CD8-positive, alpha-beta memory T cell (primary cell): ENCODE measurements at regions of chr3 and their contacts with region 1.

Region 1: GRCh38 chr3:141553055-141553454 is 66.2 kb downstream of the RASA2 start:
- DNase-seq: peak in 2 of 5 donors; percentile 74 to 77
- H3K4me3 ChIP-seq: no peak overlapping the region
- H3K4me3 Mint-ChIP-seq: peak overlapping the region in 6 of 7 donors; percentile 15 to 74 (median 56)
- H3K27ac ChIP-seq: no peak overlapping the region
- H3K27ac Mint-ChIP-seq: peak overlapping the region in 7 of 8 donors; percentile 51 to 95 (median 86)
- H3K4me1 ChIP-seq: peaks cover 71% of the 10 kb centered on the region
- H3K4me1 Mint-ChIP-seq: peaks cover 50 to 77% (median 67%) of the 10 kb centered on the region in 3 donors
- H3K27me3 ChIP-seq: no peaks in the 10 kb centered on the region
- H3K27me3 Mint-ChIP-seq: no peaks in the 10 kb centered on the region

Region 2: DNA sequence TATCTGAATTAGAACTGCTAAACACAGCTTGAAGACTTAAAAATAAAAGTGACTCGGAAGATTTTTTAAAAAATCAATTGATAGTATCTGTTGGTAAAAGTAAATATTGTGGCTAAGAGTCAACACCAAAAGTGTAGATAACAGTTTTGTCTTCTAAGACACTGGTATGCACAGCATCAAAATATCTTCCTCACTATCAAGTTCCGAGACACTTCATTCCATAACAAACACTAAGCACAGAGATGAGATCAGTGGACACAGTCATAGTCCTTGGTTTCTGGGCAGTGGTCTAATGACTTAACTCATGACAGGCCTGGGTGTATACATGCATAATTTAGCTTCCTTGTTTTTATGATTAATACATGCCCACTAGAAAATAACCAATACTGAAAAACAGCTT is 258.2 kb before region 1 on chr3:
- CTCF ChIA-PET with region 1: no interaction called
- POLR2A ChIA-PET with region 1: no interaction called
- DNase-seq: no peak
- H3K4me3 ChIP-seq: peak overlapping the region; percentile 20
- H3K4me3 Mint-ChIP-seq: peak overlapping the region; percentile 19 to 86 (median 82)
- H3K27ac ChIP-seq: no peak overlapping the region
- H3K27ac Mint-ChIP-seq: peak overlapping the region; percentile 3 to 90 (median 79)
- H3K4me1 ChIP-seq: peaks cover 16% of the 10 kb centered on the region
- H3K4me1 Mint-ChIP-seq: peaks cover 21 to 24% (median 21%) of the 10 kb centered on the region in 3 donors
- H3K27me3 ChIP-seq: no peaks in the 10 kb centered on the region
- H3K27me3 Mint-ChIP-seq: no peaks in the 10 kb centered on the region

Region 3: DNA sequence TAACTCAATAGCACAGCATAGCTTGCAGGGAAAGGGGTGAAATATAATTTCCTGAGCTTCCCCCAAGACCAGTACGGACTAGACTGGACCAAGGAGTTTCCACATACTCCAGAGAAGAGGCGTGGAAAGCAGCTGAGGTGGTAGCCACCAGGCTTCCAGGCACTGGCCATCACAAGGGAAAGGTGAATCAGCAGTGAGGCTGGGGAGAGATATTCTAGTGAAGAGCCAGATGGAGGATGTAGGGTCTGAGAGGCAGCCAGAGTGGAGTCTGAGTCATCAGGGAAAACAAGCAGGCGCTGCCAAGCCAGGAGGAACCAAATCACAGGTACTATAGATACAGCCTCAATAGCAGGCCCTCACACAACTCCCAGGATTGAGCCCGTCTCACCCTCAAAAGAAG is 75.8 kb before region 1 on chr3:
- CTCF ChIA-PET with region 1: interaction called, 12 read pairs
- POLR2A ChIA-PET with region 1: no interaction called
- DNase-seq: no peak
- H3K4me3 ChIP-seq: no peak overlapping the region
- H3K4me3 Mint-ChIP-seq: no peak overlapping the region
- H3K27ac ChIP-seq: no peak overlapping the region
- H3K27ac Mint-ChIP-seq: no peak overlapping the region
- H3K4me1 ChIP-seq: peaks cover 17% of the 10 kb centered on the region
- H3K4me1 Mint-ChIP-seq: peaks cover 28 to 43% (median 38%) of the 10 kb centered on the region in 3 donors
- H3K27me3 ChIP-seq: no peaks in the 10 kb centered on the region
- H3K27me3 Mint-ChIP-seq: peaks cover 0 to 6% of the 10 kb centered on the region in 2 donors